ENCODE measurements at regions of chr11 and their contacts with region 1.

Region 1: DNA sequence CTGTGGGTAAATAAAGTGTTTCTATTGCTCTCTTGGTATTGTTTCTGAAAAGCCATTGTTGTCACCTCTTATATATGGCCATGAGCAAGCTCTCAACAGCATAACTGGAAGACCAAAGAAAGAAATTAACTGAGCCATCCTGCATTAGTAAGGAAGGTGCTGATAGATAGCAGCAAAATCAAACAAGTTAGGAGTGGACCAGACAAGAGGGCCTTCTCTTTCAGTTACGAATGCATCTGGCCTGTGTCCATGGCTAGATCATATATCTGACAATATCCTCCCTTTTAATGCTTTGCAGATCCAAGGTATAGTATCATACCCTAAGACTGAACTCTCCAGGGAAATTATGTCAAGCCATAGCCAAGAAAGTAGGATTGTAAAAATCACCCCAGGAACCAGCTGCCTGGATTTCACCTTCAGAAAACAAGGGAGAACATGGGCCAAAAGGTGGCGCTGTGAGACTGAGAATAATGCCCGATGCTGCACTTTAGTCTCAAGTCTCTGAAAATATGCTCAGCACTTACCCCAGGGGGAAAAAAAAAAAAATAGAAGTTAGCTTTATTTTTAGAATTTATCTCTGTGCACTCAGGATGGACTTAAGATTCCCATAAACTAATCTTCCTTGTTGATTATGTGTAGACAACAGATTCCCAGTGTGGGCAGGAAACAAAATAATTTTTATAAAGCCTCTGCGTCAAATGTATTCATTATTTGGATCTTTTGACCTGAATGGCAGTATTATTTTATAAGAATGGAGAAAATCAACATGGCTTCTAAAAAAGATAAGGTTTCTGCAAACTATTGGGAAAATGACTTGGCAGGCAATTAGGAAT is 415.1 kb downstream of the ETS1 start:
- DNase-seq: peak; percentile 91
- H3K4me3 ChIP-seq: no peak overlapping the region
- H3K27ac ChIP-seq: peak overlapping the region; percentile 42
- H3K4me1 ChIP-seq: peaks cover 9% of the 10 kb centered on the region
- H3K27me3 ChIP-seq: no peaks in the 10 kb centered on the region
- CTCF ChIP-seq: peak; percentile 64 to 74
- POLR2A ChIP-seq: no peak

Region 2: GRCh38 chr11:128026596-128026995 is 145.7 kb before region 1 on chr11:
- CTCF ChIA-PET with region 1: interaction called, 3 read pairs
- POLR2A ChIA-PET with region 1: no interaction called
- dilution Hi-C with region 1: loop called (anchors 25 kb)
- intact Hi-C with region 1: loop called (anchors 1 kb)
- DNase-seq: peak; percentile 81
- H3K4me3 ChIP-seq: no peak overlapping the region
- H3K27ac ChIP-seq: peak overlapping the region; percentile 39
- H3K4me1 ChIP-seq: peaks cover 25% of the 10 kb centered on the region
- H3K27me3 ChIP-seq: no peaks in the 10 kb centered on the region
- CTCF ChIP-seq: no peak
- POLR2A ChIP-seq: no peak

Region 3: DNA sequence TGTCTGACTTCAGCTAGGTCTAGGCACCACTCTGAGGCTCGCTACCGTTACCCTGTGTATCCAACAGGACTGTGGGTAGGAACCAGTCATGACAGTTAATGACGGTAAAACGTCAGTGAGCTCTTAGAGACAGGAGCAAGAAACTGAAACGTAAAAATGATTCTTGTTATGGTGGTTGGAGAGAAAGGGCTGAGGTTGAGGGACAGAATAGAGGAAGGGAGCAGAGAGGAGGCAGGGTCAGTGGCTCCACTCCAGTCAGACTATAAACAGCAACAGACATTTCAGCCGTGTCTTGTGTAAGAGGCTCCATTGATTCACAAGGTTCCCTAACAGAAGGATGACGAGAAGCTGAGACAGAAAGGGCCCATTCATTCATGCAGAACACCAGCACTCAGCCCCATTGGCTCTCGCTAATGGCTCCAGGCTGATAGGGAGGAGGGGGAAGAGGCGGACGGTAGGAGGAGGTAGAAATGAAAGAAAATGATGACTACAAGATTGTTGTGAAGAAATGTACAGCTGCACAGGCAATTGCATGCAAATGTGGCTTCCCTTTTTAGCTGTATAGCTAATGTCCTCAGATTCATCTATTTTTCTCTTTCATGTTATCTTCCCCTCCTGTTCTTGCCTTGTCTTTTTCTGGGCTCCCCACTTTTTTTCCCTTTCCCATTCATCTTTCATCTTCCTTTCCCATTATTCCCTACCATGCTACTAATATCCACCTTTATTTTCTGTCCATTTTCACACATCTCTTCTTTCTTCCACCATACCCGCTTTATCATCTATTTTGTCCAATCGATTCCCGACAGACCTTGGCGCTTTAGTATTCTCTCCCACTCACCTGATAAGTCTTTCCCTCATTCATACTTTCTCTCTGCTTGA is 380.8 kb after region 1 on chr11:
- CTCF ChIA-PET with region 1: interaction called, 5 read pairs
- POLR2A ChIA-PET with region 1: no interaction called
- dilution Hi-C with region 1: no loop called
- intact Hi-C with region 1: loop called (anchors 1 kb)
- DNase-seq: no peak
- H3K4me3 ChIP-seq: no peak overlapping the region
- H3K27ac ChIP-seq: no peak overlapping the region
- H3K4me1 ChIP-seq: peaks cover 11% of the 10 kb centered on the region
- H3K27me3 ChIP-seq: peaks cover 4 to 6% of the 10 kb centered on the region in 2 experiments
- CTCF ChIP-seq: no peak
- POLR2A ChIP-seq: no peak

Region 4: DNA sequence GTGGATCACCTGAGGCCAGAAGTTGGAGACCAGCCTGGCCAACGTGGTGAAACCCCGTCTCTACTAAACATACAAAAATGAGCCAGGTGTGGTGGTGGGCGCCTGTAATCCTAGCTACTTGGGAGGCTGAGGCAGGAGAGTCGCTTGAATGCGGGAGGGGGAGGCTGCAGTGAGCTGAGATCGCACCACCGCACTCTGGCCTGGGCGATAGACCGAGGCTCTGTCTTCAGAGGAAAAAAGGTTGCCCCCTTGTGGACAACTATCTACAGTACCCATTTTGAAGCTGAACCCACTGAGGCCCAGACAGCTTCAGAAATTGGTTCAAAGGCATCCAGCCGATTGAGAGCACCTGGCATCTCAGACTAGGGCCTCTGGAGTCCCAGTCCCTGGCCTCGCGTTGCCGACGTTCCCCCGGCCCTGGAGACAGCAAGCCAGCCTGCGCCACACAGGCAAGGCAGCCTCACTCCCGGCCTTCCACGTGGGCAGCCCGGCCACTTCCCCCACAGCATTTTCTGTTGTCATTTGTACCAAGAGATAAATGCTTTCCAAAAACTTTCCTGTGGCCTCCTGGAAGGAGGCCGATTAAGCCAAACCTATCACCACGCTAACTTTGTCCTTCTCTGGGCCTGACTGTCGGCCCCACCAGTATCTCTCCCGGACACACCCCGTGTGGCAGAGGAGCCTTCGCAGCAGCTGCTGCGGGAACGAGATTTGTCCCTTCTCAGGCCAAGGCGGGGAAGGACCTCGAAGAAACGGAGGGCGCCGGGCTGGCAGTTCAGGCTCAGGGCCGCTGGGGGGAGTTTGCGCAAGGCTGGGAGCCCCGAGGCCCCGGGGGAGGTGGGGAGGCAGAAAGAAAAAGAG is 604.4 kb after region 1 on chr11:
- CTCF ChIA-PET with region 1: interaction called, 20 read pairs
- POLR2A ChIA-PET with region 1: no interaction called
- dilution Hi-C with region 1: no loop called
- intact Hi-C with region 1: loop called (anchors 1 kb)
- DNase-seq: no peak
- H3K4me3 ChIP-seq: no peak overlapping the region
- H3K27ac ChIP-seq: no peak overlapping the region
- H3K4me1 ChIP-seq: peaks cover 27% of the 10 kb centered on the region
- H3K27me3 ChIP-seq: no peaks in the 10 kb centered on the region
- CTCF ChIP-seq: peak; percentile 29 to 39
- POLR2A ChIP-seq: no peak

Region 5: DNA sequence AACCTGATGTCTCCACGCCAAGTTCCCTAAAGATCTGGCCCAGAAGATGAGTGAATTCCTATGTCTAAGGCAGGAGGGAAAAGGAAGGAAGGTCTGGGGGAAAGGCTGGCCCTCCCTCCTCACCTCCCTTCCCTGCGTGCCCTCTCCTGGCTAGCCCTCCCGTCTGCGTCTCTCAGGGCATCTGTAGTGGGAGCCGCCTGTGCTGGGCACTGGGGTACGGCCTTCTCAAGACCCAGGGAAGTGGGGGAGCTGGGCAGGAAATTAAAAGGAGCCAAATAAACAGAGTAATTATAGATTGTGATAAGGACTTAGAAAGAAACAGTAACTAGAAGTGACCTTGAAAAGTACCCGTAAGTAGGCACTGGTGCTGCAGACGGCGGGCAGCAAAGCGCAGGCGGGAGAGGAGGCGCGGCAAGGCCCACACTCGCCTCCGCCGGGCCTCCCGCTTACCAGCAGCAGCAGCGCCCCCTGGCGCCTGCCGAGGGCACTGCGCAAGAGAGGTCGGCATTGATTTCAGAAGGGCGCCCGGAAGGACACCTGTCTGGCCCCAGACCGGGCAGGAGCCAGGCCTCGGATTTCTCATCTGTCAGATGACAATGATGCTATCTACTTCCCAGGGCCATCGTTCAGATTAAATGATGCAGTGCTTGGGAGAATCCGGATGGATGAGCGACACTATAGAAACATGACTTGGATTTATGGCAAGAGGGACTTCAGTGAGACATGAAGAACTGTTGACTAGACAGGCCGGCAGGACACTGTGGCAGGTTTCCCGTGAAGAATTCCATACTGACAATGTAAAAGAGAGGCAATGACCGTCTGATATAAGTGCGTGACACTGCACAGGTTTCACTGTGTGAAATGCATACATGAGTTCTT is 687.5 kb after region 1 on chr11:
- CTCF ChIA-PET with region 1: interaction called, 6 read pairs
- POLR2A ChIA-PET with region 1: no interaction called
- dilution Hi-C with region 1: no loop called
- intact Hi-C with region 1: loop called (anchors 1 kb)
- DNase-seq: peak; percentile 74
- H3K4me3 ChIP-seq: no peak overlapping the region
- H3K27ac ChIP-seq: no peak overlapping the region
- H3K4me1 ChIP-seq: peaks cover 2% of the 10 kb centered on the region
- H3K27me3 ChIP-seq: no peaks in the 10 kb centered on the region
- CTCF ChIP-seq: peak; percentile 97 to 99
- POLR2A ChIP-seq: no peak

Measured in endothelial cell of umbilical vein (primary cell).